Prostate gland (tissue), 2 donors: ENCODE measurements at regions of chr5 and their contacts with region 1.

Region 1: DNA sequence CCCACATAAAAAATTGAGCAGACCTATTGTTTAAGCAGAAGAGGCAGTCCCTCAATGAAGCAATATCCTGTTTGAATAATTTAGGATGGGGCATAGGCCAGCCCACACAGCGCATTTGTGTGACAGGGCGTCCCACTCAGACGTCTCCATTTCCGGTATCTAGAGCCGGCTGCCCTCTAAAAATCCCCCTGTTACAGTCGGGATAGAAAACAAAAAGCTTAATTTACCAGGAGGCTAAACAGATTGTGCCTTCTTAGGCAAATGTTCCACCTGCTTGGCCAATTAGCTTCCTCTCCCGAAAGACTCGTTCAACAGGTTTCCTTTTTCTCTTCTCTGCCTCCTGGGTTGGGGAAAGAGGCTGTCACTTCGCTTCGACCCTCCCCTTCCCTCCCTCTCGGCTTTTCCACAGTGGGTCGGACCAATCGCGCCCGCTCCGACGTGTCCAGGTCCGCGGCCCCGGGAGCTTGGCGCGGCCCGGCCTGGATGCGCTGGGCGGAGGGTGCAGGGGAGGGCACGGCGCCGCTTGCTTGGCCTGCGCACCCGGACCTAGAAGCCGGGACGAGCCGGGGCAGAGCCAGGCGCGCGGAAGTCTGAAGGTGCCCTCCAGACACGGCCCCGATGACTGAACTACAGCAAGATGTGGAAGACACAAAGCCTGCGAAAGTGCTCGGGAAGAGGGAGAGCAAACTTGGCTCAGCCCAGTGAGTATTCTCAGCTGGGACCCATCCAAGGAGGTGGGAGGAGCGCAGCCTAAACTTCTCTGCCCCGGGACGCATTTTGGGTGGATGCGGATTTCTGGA is at the start of gene GRAMD2B:
- DNase-seq: peak; percentile 91
- H3K4me3 ChIP-seq: peak within 1 kb of the TSS; percentile 47 to 54
- H3K27ac ChIP-seq: peak within 1 kb of the TSS; percentile 81 to 87
- H3K4me1 ChIP-seq: peaks cover 11% of the 10 kb centered on the region
- H3K27me3 ChIP-seq: no peaks in the 10 kb centered on the region
- CTCF ChIP-seq: peak in 1 of 4 experiments; percentile 9
- POLR2A ChIP-seq: peak; percentile 95
- total RNA-seq, gene GRAMD2B: 32.1 to 34.4 TPM

Region 2: DNA sequence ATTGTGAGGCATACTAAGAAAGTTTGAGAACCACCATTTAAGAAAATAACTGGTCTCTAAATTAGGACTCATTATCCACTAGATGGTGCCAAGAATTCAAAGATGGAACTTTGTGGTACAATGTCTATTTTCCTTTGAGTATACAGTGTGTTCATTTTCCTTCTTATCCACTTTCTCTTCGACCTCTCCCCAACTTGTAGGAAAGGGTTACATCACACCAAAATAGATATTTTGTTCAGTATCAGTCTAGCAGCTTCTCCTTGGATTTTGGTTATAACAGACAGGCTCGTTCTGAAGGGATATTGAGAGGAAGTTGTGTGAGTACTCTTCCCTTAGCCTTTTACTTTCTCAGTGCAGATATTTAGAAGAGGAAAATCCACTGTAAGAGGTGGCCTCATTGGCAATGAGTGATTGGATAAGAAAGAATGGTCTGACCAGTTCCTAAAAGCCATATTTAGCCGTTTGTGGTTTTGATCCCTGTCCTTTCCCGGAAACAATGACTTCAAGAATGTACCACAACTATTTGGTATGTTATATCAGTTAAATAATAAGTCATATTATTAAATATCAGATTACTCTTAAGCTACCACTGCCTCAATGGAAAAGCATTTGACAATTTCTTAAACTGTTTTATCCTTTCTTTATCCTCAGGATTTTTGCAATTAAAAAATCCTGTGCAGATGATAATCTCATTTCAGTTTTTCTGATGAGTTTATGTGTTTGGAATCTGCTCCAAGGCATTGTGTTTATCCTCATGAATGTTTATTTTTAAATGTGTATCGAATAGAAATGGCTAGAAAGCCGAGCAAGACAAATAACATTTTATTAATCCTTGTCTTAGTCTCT is 69.0 kb before region 1 on chr5:
- intact Hi-C with region 1: loop called (anchors 5 kb)
- DNase-seq: no peak
- H3K4me3 ChIP-seq: no peak overlapping the region
- H3K27ac ChIP-seq: peak overlapping the region; percentile 77 to 81
- H3K4me1 ChIP-seq: no peaks in the 10 kb centered on the region
- H3K27me3 ChIP-seq: no peaks in the 10 kb centered on the region
- CTCF ChIP-seq: peak in 3 of 4 experiments; percentile 60 to 82 (median 69)
- POLR2A ChIP-seq: no peak

Region 3: DNA sequence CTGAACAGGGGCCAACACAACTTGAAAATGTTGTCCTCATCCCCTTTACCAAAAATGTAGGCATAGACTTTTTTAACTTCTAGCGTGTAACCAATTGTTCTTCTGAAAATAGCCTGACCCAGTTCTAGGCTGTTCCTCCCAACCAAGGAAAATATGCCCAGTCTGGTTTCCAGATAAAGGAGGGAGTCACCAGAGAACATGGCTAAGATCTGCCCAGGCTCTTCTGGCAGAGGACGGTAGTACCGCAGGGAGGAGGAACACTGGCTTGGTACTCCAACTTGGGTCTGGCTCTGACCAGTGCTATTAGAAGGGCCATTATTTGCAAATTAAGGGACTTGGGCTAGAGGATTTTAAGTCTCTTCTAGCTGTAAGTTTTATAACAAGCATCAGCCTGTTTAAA is 63.1 kb after region 1 on chr5:
- intact Hi-C with region 1: loop called (anchors 5 kb)
- DNase-seq: no peak
- H3K4me3 ChIP-seq: no peak overlapping the region
- H3K27ac ChIP-seq: no peak overlapping the region
- H3K4me1 ChIP-seq: no peaks in the 10 kb centered on the region
- H3K27me3 ChIP-seq: no peaks in the 10 kb centered on the region
- CTCF ChIP-seq: no peak
- POLR2A ChIP-seq: no peak